Heart left ventricle (tissue), 16 donors: ENCODE measurements at regions of chr13 and their contacts with region 1.

Region 1: DNA sequence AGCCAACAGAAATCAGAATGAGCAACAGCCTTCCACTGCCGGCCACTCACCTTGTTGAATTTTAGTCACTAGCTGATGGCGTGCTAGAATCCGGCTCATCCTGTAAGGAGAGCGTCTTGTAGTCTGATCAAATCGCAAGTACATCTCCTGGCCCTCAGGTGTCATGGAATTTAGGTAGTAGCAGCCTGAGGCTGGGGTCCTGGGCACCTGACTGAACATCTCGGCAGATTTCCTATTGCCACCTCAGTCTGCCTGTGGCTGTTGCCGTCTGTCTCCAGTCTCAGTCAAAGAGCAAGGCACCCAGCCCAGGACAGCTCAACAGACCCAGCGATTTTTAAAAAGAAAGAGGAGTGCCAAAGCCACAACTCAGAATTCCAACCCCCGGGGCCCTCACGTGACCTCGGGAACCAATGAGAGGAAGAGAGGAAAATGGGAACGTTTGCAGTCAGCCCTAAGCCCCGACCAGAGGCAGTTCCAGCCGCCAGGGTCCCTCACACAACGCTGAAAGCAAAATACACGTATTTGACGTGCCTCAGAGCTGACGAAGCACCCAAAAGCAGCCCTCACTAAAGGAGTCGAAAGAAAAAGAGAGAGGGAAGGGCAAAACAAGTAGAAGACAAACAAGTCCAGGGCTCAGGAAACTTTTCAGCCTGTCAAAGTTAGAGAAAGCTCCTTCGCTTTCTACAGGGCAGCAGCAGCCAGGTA is at the start of gene STARD13:
- DNase-seq: peak; percentile 92 to 96 (median 95)
- ATAC-seq: peak; percentile 93 to 97 (median 95)
- H3K4me3 ChIP-seq: peak within 1 kb of the TSS; percentile 50 to 84 (median 68)
- H3K27ac ChIP-seq: peak within 1 kb of the TSS; percentile 89 to 98 (median 96)
- H3K4me1 ChIP-seq: peaks cover 0 to 56% (median 33%) of the 10 kb centered on the region in 12 donors
- H3K27me3 ChIP-seq: no peaks in the 10 kb centered on the region
- CTCF ChIP-seq: peak in 11 of 12 donors; percentile 11 to 68 (median 46)
- POLR2A ChIP-seq: peak in 1 of 2 donors; percentile 95
- total RNA-seq, gene STARD13: 18.6 to 39.2 (median 31.6) TPM

Region 2: DNA sequence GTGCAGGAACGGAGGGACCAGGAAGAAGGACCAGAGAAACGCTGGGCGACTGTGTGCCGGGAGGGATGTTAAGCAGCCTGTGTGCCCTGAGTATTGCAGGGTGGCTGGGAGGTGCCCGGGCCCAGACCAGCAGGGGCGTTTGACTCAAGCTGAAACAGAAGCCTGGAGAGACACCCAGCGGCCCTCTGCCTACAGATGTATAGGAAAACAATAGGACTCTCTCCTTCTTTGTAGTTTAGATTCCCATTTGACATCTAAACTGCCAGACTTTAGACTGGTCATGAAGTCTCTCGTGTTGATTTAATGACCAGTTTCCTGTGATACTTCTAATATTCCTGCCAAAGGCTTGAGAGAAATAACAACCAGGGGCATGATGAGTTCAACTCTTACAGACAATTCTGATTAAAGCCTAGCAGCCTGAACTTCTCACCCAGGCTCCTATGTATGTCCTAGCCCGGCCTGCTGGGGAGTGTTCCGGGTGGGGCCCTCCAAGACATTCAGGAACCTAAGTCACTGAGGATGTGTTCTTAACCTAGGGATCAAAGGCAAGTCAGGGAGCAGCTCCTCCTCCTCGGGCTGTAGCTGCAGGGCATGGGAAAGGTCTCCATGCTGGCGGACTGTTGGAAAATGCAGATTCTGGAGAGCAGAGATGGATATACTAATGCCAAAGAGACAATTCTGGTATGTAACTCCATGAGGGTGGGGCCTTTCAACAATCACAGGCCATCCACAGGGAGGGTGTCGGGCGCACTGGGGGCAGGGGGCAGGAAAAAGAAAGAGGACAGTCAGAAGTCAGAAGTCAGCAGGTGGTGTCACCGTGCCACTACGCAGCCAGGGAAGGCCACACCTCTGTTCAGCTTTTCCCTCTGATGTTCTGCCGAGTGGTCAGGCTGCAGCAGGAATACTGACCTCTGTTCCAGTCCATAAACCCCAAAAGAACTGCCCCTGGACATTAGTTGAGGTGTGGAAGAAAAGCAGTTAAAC is 131.9 kb before region 1 on chr13:
- intact Hi-C with region 1: no loop called
- DNase-seq: peak; percentile 60 to 74 (median 71)
- ATAC-seq: peak; percentile 48 to 90 (median 85)
- H3K4me3 ChIP-seq: no peak overlapping the region
- H3K27ac ChIP-seq: peak overlapping the region; percentile 24 to 76 (median 53)
- H3K4me1 ChIP-seq: peaks cover 0 to 46% (median 13%) of the 10 kb centered on the region in 12 donors
- H3K27me3 ChIP-seq: no peaks in the 10 kb centered on the region
- CTCF ChIP-seq: no peak
- POLR2A ChIP-seq: no peak

Region 3: DNA sequence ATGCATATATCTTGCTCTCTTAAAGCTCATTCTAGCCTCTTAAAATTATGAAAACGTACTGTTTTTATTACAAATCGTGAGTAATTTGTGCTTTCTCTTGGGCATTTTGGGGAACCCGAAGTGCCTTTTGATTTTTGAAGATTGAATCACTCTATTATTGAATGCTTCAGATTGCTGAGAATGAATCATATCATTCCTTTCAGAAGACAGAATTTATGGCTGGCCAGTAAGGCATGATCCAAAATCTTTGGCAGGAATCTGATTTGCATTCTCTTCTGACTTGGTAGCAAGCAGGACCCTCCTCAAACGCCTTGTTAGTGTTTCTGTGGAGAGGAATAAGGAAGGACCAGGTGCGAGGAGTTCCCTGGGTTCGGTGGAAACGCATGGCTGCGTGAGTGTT is 49.6 kb before region 1 on chr13:
- intact Hi-C with region 1: loop called in 6 of 10 experiments (anchors 2 to 10 kb)
- DNase-seq: no peak
- ATAC-seq: peak in 1 of 4 donors; percentile 50
- H3K4me3 ChIP-seq: no peak overlapping the region
- H3K27ac ChIP-seq: peak overlapping the region in 10 of 12 donors; percentile 4 to 65 (median 37)
- H3K4me1 ChIP-seq: peaks cover 0 to 54% (median 31%) of the 10 kb centered on the region in 12 donors
- H3K27me3 ChIP-seq: no peaks in the 10 kb centered on the region
- CTCF ChIP-seq: no peak
- POLR2A ChIP-seq: no peak

Region 4: DNA sequence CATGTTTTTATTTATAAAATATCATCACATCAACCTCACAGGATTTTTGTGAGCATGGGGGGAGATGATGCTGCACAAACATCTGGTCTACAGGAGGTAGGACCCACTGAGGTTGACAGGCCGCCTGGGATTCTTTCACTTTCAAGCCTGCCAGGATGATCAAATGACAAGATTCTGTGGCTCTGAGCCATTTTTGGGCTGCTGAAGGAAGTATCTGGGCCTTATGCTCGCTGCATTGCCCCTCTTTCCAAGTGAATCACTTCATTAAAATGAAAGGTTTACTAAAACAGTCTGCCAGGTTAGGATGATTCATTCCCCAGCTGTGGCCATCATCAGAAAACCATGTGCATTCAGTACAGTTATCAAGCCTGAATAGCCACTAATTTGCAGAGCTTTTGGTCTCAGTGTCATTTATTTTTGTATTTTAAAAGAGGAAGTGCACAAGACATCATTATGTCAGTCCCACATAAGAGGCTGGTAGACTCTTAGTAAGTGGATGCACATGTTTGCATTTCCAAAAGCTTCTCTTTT is 34.4 kb before region 1 on chr13:
- intact Hi-C with region 1: loop called in 1 of 10 experiments (anchors 2 kb)
- DNase-seq: peak in 3 of 5 donors; percentile 37 to 51 (median 45)
- ATAC-seq: peak in 3 of 4 donors; percentile 38 to 72 (median 57)
- H3K4me3 ChIP-seq: no peak overlapping the region
- H3K27ac ChIP-seq: peak overlapping the region; percentile 66 to 92 (median 80)
- H3K4me1 ChIP-seq: peaks cover 8 to 80% (median 46%) of the 10 kb centered on the region in 12 donors
- H3K27me3 ChIP-seq: no peaks in the 10 kb centered on the region
- CTCF ChIP-seq: no peak
- POLR2A ChIP-seq: no peak